Endothelial cell of umbilical vein (primary cell): ENCODE measurements at regions of chr1 and their contacts with region 1.

Region 1: DNA sequence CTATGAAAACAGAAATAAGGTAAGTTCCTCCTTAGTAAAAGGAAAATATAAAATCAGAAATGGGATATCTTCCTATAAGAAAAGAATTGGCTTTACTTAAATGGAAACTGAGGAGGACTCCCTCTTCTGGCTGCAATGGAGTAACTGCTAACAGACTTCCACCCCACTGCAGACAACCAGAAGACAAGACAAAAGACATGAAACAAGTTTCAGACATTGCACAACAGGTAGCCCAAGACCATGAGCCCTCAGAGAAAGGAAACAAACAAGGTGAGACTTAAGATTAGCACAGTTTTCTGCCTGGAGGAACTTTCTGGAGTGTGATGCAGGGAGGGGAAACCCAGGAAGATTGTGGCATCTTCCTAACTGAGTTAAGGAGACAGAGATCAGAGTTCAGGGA is 17.0 kb upstream of the OLFML2B start:
- DNase-seq: peak; percentile 40
- H3K4me3 ChIP-seq: no peak overlapping the region
- H3K27ac ChIP-seq: no peak overlapping the region
- H3K4me1 ChIP-seq: peaks cover under 1% of the 10 kb centered on the region
- H3K27me3 ChIP-seq: peaks cover 0 to 2% of the 10 kb centered on the region in 2 experiments
- CTCF ChIP-seq: peak; percentile 45 to 65
- POLR2A ChIP-seq: no peak

Region 2: DNA sequence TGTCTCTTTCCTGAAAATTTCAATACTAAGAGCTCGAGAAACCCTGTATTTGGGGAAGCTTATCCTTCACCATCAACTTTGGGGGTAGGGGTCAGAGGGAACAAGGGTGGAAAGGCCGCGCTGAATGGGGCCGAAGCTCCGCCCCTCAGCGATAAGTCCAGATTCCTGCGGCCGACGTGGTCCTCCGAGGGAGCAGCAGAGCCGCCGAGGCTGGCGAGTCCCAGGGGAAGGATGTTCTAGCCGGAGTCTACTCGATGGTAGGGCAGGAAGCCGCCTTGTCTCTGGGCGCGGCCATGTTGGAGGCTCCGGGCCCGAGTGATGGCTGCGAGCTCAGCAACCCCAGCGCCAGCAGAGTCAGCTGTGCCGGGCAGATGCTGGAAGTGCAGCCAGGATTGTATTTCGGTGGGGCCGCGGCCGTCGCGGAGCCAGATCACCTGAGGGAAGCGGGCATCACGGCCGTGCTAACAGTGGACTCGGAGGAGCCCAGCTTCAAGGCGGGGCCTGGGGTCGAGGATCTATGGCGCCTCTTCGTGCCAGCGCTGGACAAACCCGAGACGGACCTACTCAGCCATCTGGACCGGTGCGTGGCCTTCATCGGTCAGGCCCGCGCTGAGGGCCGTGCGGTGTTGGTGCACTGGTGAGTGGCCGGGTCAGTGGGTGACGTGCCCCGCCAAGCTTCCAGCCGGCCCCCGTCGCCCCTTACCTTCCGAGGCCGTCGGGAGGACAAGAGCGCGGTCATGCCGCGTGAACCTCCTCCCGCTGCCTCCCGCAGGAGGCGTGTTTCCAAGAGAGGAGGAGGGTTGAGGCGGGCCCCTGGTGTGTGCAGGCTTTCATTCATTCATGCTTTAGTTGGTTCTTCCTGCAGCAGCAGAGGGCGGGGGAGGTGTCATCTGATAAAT is 290.9 kb before region 1 on chr1 and contains the start of gene DUSP12:
- CTCF ChIA-PET with region 1: interaction called, 25 read pairs
- POLR2A ChIA-PET with region 1: no interaction called
- dilution Hi-C with region 1: no loop called
- intact Hi-C with region 1: no loop called
- DNase-seq: peak; percentile 96
- H3K4me3 ChIP-seq: peak within 1 kb of the TSS; percentile 43 to 77 (median 70)
- H3K27ac ChIP-seq: peak within 1 kb of the TSS; percentile 77
- H3K4me1 ChIP-seq: peaks cover 12% of the 10 kb centered on the region
- H3K27me3 ChIP-seq: peaks cover 0 to 2% of the 10 kb centered on the region in 2 experiments
- CTCF ChIP-seq: no peak
- POLR2A ChIP-seq: peak; percentile 92
- total RNA-seq, gene DUSP12: 26.8 and 28.3 TPM in 2 replicates

Region 3: GRCh38 chr1:161781995-161782394 is 258.7 kb before region 1 on chr1:
- CTCF ChIA-PET with region 1: interaction called, 13 read pairs
- POLR2A ChIA-PET with region 1: no interaction called
- dilution Hi-C with region 1: no loop called
- intact Hi-C with region 1: no loop called
- DNase-seq: no peak
- H3K4me3 ChIP-seq: no peak overlapping the region
- H3K27ac ChIP-seq: no peak overlapping the region
- H3K4me1 ChIP-seq: no peaks in the 10 kb centered on the region
- H3K27me3 ChIP-seq: no peaks in the 10 kb centered on the region
- CTCF ChIP-seq: no peak
- POLR2A ChIP-seq: no peak

Region 4: GRCh38 chr1:161840363-161840762 is 200.3 kb before region 1 on chr1:
- CTCF ChIA-PET with region 1: interaction called, 10 read pairs
- POLR2A ChIA-PET with region 1: no interaction called
- dilution Hi-C with region 1: no loop called
- intact Hi-C with region 1: no loop called
- DNase-seq: no peak
- H3K4me3 ChIP-seq: no peak overlapping the region
- H3K27ac ChIP-seq: no peak overlapping the region
- H3K4me1 ChIP-seq: peaks cover 19% of the 10 kb centered on the region
- H3K27me3 ChIP-seq: no peaks in the 10 kb centered on the region
- CTCF ChIP-seq: no peak
- POLR2A ChIP-seq: no peak

Region 5: DNA sequence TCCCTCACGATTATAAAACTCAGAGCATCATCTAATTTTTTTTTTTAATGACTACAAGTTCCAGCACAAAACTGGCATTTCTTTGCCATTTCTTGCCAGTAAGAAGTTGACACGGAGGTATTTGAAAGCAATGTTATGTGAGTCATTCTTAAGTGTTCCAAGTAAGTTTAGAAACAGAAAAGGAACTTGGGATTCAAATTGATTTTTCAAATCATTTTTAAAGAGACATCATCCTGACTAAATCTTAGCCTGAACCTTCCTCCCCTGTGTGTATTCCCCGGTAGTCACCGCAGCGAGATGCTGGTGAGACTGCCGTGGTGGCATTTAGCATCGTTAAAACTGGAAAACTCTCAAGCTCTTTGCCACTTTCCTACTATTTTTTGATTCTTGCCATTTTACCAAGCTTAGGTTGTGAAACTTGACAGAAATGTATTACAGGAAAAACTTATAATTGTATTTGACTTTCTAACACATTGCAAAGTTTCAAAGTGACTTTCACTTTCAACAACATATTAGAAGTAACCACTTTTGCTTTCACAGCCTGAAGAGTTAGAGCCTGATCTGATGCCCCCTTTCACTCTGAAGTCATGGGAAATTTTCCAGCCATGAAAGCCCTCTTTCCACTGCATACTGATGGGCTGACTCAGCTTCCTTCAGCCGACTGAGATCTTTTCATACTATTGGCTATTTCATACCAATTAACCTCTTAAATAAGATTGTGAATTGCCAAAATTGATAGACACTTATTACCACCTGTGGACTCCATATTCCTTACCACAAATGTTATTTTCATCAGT is 78.4 kb before region 1 on chr1:
- CTCF ChIA-PET with region 1: interaction called, 15 read pairs
- POLR2A ChIA-PET with region 1: no interaction called
- dilution Hi-C with region 1: no loop called
- intact Hi-C with region 1: no loop called
- DNase-seq: peak; percentile 96
- H3K4me3 ChIP-seq: peak overlapping the region in 2 of 3 experiments; percentile 17 to 80
- H3K27ac ChIP-seq: peak overlapping the region; percentile 98
- H3K4me1 ChIP-seq: peaks cover 21% of the 10 kb centered on the region
- H3K27me3 ChIP-seq: no peaks in the 10 kb centered on the region
- CTCF ChIP-seq: no peak
- POLR2A ChIP-seq: no peak